Sigmoid colon (tissue), 7 donors: ENCODE measurements at regions of chr6 and their contacts with region 1.

Region 1: GRCh38 chr6:37483917-37484785 is 15.5 kb downstream of the CCDC167 start:
- DNase-seq: no peak
- H3K4me3 ChIP-seq: no peak overlapping the region
- H3K27ac ChIP-seq: no peak overlapping the region
- H3K4me1 ChIP-seq: peaks cover 0 to 26% (median 15%) of the 10 kb centered on the region in 4 donors
- H3K27me3 ChIP-seq: no peaks in the 10 kb centered on the region
- CTCF ChIP-seq: peak; percentile 29 to 68 (median 44)
- EP300 ChIP-seq: no peak
- POLR2A ChIP-seq: no peak

Region 2: DNA sequence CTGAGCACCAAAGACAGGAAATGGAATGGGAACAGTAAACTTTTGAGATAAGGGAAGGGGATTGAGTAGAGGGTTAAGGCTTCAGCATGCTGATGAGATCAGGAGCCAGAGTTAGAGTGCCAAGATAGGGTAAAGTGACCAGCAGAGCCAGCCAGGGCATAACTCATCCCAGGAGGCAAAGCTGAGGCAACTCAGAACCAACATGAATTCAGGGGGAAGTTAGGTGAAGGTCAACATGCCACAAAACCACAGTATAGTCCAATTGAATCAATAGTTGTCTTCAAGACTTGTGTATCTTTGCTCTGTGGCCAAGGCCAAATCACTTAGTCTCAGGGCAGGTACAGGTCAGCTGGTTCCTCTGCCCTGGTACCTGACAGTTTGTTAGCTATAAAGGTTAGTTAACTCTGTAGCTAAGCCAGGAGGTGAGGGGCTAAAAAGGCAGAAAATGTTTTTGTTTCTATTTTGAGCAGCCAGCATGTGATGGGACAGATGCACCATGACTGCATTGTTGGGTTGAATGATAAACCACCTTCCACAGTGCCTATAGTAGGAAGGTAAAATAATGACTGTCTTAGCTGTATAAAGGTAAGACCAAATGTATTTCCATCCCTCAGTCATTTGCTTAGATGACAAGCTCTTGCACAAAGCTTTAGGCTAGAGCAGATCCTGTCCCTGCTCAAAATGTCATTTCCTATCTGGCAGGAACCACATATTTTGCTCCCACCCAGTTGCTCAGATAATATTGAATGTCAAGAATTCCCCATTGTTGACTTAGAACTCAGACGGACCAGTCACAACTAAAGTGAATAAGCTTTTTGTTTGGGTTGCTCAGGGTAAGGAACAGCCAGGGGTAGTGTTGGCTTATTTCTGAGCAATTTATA is 114.6 kb before region 1 on chr6:
- intact Hi-C with region 1: loop called (anchors 10 kb)
- DNase-seq: no peak
- H3K4me3 ChIP-seq: no peak overlapping the region
- H3K27ac ChIP-seq: no peak overlapping the region
- H3K4me1 ChIP-seq: peaks cover 0 to 14% (median 0%) of the 10 kb centered on the region in 4 donors
- H3K27me3 ChIP-seq: no peaks in the 10 kb centered on the region
- CTCF ChIP-seq: no peak
- EP300 ChIP-seq: no peak
- POLR2A ChIP-seq: no peak